Psoas muscle (tissue), 8 donors: ENCODE measurements at regions of chr5 and their contacts with region 1.

Region 1: GRCh38 chr5:1806974-1807373 is 5.8 kb downstream of the NDUFS6 start:
- DNase-seq: no peak
- ATAC-seq: no peak
- H3K4me3 ChIP-seq: no peak overlapping the region
- H3K27ac ChIP-seq: no peak overlapping the region
- H3K4me1 ChIP-seq: peaks cover 34% of the 10 kb centered on the region
- H3K27me3 ChIP-seq: no peaks in the 10 kb centered on the region
- CTCF ChIP-seq: no peak

Region 2: GRCh38 chr5:1793966-1794897 is 12.7 kb before region 1 on chr5:
- intact Hi-C with region 1: loop called in 1 of 2 experiments (anchors 1 kb)
- DNase-seq: no peak
- ATAC-seq: peak; percentile 42 to 60 (median 55)
- H3K4me3 ChIP-seq: peak overlapping the region; percentile 11
- H3K27ac ChIP-seq: peak overlapping the region; percentile 9
- H3K4me1 ChIP-seq: peaks cover 11% of the 10 kb centered on the region
- H3K27me3 ChIP-seq: no peaks in the 10 kb centered on the region
- CTCF ChIP-seq: no peak